ENCODE measurements at regions of chr5 and their contacts with region 1.

Region 1: DNA sequence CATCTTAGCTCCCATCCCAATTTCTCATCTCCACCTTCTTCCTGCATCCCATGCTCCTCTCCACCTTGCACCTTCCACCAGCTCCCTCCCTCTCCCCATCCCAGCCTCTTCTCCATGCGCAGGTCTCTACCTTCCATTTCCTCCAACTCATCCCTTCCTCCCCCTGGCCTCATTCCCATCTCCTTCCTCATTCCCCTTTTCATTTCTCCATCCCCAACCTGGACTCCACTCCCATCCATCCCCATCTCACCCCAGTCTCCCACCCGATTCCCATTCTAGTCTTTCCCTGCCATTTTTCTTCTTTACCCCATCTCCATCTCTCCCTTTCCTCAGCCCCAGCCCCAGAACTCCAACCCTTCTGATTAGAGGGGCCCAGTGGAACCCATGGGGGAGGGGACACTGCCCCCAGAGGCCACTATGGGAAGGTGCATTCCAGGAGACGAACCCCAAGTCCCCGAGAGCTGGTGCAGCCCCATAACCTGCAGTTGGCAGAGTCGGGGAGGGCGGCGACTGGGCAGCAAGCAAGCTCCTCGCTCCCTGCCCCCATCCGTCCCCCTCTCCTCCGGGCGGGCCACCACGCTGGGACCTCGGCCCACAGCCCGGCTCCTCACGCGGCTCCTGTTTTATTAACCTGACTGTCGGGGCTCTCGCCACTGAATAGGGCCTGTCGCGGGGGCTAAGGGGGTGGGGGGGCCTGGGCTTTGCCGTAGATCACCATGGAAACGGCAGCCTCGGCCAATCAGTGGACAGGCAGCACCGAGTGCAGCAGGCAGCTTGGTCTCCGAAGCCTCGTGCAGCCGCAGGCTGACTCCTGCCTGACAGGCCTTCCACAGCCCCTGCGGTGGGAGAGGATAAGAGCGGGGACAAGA is 66.7 kb downstream of the PCDH1 start:
- DNase-seq: no peak
- ATAC-seq: peak in 1 of 4 donors; percentile 17
- H3K4me3 ChIP-seq: no peak overlapping the region
- H3K27ac ChIP-seq: peak overlapping the region in 1 of 12 donors; percentile 53
- H3K4me1 ChIP-seq: peaks cover 3 to 67% (median 32%) of the 10 kb centered on the region in 12 donors
- H3K27me3 ChIP-seq: peaks cover 0 to 38% (median 5%) of the 10 kb centered on the region in 9 donors
- CTCF ChIP-seq: peak in 11 of 12 donors; percentile 34 to 65 (median 50)
- POLR2A ChIP-seq: no peak

Region 2: GRCh38 chr5:141691867-141692532 is 119.5 kb before region 1 on chr5:
- intact Hi-C with region 1: loop called in 1 of 10 experiments (anchors 5 kb)
- DNase-seq: peak; percentile 85 to 93 (median 87)
- ATAC-seq: peak; percentile 79 to 91 (median 90)
- H3K4me3 ChIP-seq: peak overlapping the region in 11 of 12 donors; percentile 11 to 51 (median 37)
- H3K27ac ChIP-seq: no peak overlapping the region
- H3K4me1 ChIP-seq: peaks cover 0 to 28% (median 10%) of the 10 kb centered on the region in 12 donors
- H3K27me3 ChIP-seq: peaks cover 0 to 3% (median 0%) of the 10 kb centered on the region in 9 donors
- CTCF ChIP-seq: peak; percentile 98 to 100 (median 99)
- POLR2A ChIP-seq: no peak

Region 3: GRCh38 chr5:141701360-141702119 is 110.0 kb before region 1 on chr5:
- intact Hi-C with region 1: loop called (anchors 2 to 5 kb)
- DNase-seq: peak in 2 of 5 donors; percentile 48 to 52
- ATAC-seq: peak in 3 of 4 donors; percentile 19 to 47 (median 20)
- H3K4me3 ChIP-seq: peak overlapping the region in 8 of 12 donors; percentile 49 to 65 (median 58)
- H3K27ac ChIP-seq: peak overlapping the region in 4 of 12 donors; percentile 3 to 50 (median 22)
- H3K4me1 ChIP-seq: peaks cover 0 to 23% (median 15%) of the 10 kb centered on the region in 12 donors
- H3K27me3 ChIP-seq: peaks cover 0 to 39% (median 17%) of the 10 kb centered on the region in 9 donors
- CTCF ChIP-seq: no peak
- POLR2A ChIP-seq: no peak

Region 4: DNA sequence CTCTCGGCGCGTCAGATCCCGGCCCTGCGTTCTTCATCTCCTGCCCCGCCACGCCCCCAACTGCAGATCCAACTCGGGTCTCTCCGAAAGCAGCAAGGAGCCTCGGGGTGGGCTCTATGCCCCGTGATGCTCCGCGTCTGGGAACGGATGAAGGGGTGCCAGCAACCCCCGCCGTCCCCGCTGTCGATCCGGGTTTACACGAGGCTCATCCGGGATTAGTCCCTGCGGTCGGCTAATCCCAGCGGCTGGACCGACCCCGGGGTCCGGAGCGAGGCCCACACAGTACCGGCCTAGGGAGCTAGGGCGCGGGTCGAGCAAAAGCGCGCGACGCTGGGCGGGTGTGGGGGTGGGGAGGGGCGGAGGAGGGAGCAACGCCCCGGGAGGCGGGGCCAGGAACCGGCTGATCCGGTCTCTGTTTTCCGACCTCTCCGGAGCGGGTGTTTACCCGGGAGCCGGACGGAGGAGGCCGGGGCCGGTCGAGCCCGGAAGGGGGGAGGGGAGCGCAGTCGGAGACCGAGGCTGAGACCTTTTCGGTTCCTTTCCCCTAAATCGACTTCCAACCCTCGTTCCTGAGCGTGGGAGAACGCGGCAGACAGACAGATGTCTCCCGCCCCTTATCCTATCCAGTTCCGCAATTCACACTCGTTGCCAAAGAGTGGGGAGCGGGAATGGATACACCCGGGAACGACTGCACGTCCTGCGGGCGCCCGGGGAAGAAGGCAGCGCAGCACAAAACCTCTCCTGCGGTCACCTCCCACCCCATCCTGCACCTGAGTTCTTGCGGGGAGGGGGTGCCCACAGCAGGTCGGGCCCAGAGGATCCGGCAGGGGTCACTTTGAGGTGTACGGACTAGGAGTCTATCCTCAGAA is 38.1 kb after region 1 on chr5:
- intact Hi-C with region 1: loop called in 4 of 10 experiments (anchors 5 kb)
- DNase-seq: peak; percentile 92 to 93 (median 93)
- ATAC-seq: peak; percentile 86 to 95 (median 91)
- H3K4me3 ChIP-seq: peak overlapping the region; percentile 36 to 94 (median 74)
- H3K27ac ChIP-seq: peak overlapping the region; percentile 76 to 99 (median 96)
- H3K4me1 ChIP-seq: peaks cover 0 to 40% (median 27%) of the 10 kb centered on the region in 12 donors
- H3K27me3 ChIP-seq: no peaks in the 10 kb centered on the region
- CTCF ChIP-seq: peak in 3 of 12 donors; percentile 9 to 23 (median 10)
- POLR2A ChIP-seq: peak in 1 of 2 donors; percentile 82